ENCODE measurements at regions of chr5 and their contacts with region 1.

Region 1: DNA sequence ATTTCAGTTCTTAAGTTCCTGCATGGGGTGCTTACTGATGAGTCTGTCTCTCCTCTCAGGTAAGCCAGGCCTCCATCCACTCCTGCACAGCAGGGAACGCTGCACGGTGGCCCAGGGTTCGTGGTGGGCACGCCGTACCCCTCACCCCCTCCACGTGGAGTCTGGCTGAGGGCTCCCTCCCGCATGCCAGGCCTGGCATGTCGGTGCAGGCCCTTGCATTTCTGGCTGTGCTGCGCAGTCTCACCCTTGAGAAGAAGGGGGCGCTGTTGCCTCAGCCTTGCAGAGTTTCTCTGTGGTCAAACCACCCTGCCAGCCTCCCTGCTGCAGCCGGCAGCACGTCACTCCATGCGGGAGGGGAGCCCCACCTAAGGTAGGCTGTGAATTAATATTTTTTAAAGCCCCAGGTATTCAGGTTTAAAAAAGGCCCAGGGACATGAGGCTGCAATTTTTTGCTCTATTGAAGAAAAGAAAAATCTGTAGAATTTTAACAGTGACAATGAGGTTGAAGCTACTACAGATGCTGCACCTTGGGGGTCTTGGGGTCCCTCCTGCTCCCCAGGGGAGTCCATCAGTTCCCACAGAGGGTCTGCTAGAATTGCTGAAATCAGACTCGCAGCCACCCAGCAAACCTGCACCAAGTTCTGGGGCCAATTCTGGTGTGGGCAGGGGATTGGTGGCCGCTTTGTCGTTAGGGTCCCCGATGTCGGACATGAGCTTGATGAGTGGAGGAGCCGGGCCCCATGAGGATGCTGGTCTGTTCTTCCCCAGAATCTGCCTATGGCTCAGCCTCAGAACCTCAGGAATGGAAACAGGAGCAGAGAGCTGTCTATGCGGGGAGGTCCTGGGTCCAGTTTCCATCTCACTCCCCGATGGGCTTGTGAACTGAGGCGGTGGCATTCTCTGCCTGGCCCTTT is 52.6 kb downstream of the TENT4A start:
- H3K4me3 ChIP-seq: no peak overlapping the region
- H3K27ac ChIP-seq: no peak overlapping the region
- H3K4me1 ChIP-seq: no peaks in the 10 kb centered on the region
- CTCF ChIP-seq: peak; percentile 88

Region 2: DNA sequence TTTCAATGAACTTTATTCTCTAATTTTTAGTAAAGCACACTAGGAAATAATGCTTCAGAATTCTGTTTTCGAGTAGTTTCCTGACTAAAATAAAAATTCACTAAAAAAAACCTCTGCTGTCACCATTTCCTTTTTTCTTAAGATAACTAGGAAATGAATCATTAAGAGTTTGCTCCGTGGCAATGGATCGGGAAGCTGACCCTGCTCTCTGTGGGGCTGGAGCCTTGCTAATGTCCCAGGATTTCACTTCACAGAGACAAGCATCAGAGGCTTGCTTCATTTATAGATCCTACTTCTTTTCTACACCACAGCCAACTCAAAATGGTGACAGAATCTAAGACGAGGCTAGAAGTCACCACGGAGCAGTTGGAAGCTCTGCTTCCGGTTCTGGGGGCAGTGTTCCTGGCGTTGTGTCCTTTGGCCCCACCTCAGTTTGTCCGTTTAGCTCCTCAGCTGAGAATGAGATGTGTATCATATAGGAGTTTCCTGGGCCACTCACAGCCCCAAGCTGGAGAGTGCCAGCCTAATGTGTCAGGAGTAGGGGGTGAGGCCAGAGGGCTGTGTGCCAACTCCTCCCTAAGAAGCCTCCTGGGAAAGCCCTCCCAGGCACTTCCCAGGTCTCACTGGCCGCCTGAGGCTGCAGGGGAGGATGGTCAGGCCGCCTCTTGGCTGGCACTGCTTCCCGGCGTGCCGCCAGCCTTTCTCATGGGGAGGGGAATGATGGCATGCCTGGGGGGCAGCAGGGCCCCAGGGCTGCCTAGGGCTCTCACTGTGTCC is 33.0 kb before region 1 on chr5:
- CTCF ChIA-PET with region 1: no interaction called
- POLR2A ChIA-PET with region 1: no interaction called
- H3K4me3 ChIP-seq: no peak overlapping the region
- H3K27ac ChIP-seq: no peak overlapping the region
- H3K4me1 ChIP-seq: peaks cover 34% of the 10 kb centered on the region
- CTCF ChIP-seq: no peak

Region 3: DNA sequence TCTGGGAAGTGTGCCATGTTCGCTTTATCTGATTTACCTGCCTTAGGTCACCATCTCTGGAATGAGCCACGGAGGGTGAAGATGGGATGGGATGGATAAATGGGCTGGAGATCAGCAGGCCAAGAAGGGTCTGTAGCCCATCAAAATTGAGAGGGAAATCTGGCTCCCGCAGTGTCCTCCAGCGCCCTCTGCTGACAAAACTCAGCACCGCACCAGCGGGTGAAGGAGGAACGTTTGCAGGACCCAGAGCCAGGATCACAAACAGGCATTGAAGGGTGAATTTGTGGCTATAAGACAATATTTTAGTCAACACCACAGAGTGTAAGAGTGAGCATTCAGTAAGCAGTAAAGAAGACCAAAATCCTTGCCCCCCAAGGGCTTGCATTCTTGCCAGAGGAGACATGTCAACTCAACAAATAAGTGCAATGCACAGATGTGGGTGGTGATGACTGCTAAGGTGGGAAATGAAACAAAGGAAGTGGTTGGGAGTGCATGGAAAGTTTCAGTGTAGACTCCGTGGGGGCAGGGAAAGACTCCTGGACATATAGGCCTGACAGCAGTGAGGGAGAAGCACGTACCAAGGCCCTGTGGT is 71.7 kb after region 1 on chr5:
- CTCF ChIA-PET with region 1: interaction called, 11 read pairs
- POLR2A ChIA-PET with region 1: no interaction called
- H3K4me3 ChIP-seq: no peak overlapping the region
- H3K27ac ChIP-seq: no peak overlapping the region
- H3K4me1 ChIP-seq: no peaks in the 10 kb centered on the region
- CTCF ChIP-seq: peak; percentile 46; the same call in 1 of the 2 replicates

Region 4: DNA sequence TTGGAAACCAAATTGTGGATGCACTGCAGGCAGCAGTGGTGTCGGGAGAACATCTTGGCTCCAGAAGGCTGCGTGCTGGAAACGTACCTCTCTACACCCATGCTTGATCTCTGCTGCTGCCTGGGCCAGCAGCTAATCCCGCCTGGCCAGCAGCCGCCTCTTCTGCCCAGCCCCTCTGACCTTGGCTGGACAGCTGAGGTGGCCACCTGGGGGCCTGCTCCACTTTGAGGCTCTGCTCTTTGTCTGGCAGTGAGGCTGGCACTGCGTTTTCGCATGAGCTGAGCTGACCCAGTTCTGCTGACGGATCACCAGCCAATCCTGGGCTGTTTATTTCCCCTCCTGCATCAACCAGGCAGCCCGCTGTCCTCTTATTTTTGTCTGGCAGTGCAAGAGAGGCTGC is 102.3 kb after region 1 on chr5:
- CTCF ChIA-PET with region 1: no interaction called
- POLR2A ChIA-PET with region 1: no interaction called
- H3K4me3 ChIP-seq: no peak overlapping the region
- H3K27ac ChIP-seq: no peak overlapping the region
- H3K4me1 ChIP-seq: no peaks in the 10 kb centered on the region
- CTCF ChIP-seq: no peak